Dendritic cell treated with granulocyte-macrophage colony-stimulating factor and Interleukin-4, amounts not matched to agents 40 ng/mL and 50 ng/mL, for 4 days (primary cell): ENCODE measurements at regions of chr1 and their contacts with region 1.

Region 1: DNA sequence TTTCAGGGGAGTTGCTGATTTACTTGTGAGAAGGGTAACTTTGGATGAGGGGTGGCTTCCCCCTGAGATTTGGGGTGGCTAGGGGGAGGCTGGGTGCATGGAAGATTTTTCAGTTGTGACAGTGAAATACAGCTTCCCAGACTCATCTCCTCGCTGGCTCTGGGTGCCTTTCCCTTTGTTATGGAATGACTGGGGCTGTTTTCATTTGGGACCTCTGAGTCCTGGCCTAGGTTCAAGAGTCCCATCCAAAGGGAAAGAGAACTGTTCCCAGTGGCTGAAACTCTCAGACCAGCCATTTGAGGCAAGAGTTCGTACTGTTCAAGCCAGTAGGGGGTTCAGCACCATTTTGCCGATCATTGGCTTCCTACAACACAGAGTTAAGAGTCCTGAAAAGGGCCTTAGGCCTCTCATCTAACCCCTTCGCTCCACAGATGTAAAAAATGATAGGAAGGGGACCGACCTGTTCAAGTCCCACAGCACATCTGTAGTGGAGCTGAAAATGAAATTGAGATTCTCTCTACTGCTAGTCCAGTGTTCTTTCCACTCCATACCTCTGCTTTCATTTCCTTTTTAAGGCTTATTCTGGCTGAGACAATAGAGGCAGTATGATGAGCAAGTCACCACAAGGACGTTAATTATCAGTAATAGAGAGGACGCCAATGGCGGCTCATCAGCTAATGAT is 958 bp downstream of the DDR2 start:
- H3K4me3 Mint-ChIP-seq: no peak overlapping the region
- H3K27ac Mint-ChIP-seq: no peak overlapping the region
- H3K4me1 Mint-ChIP-seq: no peaks in the 10 kb centered on the region
- H3K27me3 Mint-ChIP-seq: peaks cover 2% of the 10 kb centered on the region

Region 2: GRCh38 chr1:162357681-162358266 is 275.4 kb before region 1 on chr1:
- intact Hi-C with region 1: loop called (anchors 10 kb)
- H3K4me3 Mint-ChIP-seq: no peak overlapping the region
- H3K27ac Mint-ChIP-seq: no peak overlapping the region
- H3K4me1 Mint-ChIP-seq: peaks cover 20% of the 10 kb centered on the region
- H3K27me3 Mint-ChIP-seq: no peaks in the 10 kb centered on the region